ENCODE measurements at regions of chr2 and their contacts with region 1.

Region 1: DNA sequence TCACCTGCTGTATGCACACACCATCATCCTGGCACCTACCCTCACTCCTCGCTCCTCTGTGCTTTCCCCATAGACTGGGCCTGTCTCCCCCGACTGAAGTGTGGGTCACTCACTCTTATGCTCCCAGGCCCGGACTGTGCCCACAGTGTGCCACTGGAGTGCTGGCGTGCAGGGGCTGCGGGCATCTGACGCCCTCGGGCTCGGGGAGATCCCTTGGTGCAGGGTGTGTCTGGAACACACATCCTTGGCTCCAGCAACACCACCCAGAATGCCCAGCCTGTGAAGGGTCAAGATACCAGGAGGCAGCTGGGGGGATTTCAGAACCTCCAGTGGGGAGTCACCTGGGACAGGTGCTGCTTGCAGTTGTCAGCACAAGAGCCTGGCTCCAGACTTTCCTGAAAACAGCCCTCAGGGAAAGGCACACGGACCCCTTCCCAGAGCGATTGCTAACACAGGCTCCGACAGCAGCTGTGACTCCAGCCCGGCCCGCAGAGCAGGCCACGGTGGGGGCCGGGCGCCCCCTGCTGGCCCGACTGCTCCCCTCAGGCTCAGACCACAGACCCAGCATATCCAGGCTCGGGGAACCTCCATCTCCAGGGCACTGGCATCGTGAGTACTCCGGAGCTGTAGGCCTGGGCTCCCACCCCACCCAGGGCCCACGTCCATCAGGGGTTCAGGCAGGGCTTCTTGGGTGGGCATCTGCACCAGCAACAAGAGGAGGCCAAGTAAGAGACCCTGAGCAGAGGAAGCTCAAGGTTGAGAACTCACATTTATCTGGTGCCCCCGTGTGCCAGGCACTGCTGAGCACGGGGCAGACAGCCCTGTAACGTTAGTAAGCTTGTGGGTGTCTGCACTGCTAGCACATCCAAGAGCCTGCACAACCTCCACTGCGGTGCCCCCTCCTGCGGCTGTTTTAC is 8.6 kb downstream of the HS1BP3 start:
- DNase-seq: peak; percentile 74
- H3K4me3 Mint-ChIP-seq: no peak overlapping the region
- H3K27ac Mint-ChIP-seq: peak overlapping the region; percentile 46
- H3K4me1 Mint-ChIP-seq: no peaks in the 10 kb centered on the region
- H3K27me3 Mint-ChIP-seq: no peaks in the 10 kb centered on the region

Region 2: GRCh38 chr2:20411361-20411894 is 230.9 kb before region 1 on chr2:
- CTCF ChIA-PET with region 1: interaction called, 14 read pairs
- POLR2A ChIA-PET with region 1: no interaction called
- DNase-seq: peak; percentile 77
- H3K4me3 Mint-ChIP-seq: no peak overlapping the region
- H3K27ac Mint-ChIP-seq: no peak overlapping the region
- H3K4me1 Mint-ChIP-seq: peaks cover 1% of the 10 kb centered on the region
- H3K27me3 Mint-ChIP-seq: peaks cover 36% of the 10 kb centered on the region

Region 3: GRCh38 chr2:20424300-20425290 is 217.7 kb before region 1 on chr2:
- CTCF ChIA-PET with region 1: interaction called, 11 read pairs
- POLR2A ChIA-PET with region 1: no interaction called
- DNase-seq: peak; percentile 20
- H3K4me3 Mint-ChIP-seq: peak overlapping the region; percentile 17
- H3K27ac Mint-ChIP-seq: peak overlapping the region; percentile 90
- H3K4me1 Mint-ChIP-seq: peaks cover 28% of the 10 kb centered on the region
- H3K27me3 Mint-ChIP-seq: no peaks in the 10 kb centered on the region

Region 4: GRCh38 chr2:20438334-20439192 is 203.8 kb before region 1 on chr2:
- CTCF ChIA-PET with region 1: interaction called, 30 read pairs
- POLR2A ChIA-PET with region 1: no interaction called
- DNase-seq: no peak
- H3K4me3 Mint-ChIP-seq: no peak overlapping the region
- H3K27ac Mint-ChIP-seq: no peak overlapping the region
- H3K4me1 Mint-ChIP-seq: no peaks in the 10 kb centered on the region
- H3K27me3 Mint-ChIP-seq: peaks cover 41% of the 10 kb centered on the region

Region 5: DNA sequence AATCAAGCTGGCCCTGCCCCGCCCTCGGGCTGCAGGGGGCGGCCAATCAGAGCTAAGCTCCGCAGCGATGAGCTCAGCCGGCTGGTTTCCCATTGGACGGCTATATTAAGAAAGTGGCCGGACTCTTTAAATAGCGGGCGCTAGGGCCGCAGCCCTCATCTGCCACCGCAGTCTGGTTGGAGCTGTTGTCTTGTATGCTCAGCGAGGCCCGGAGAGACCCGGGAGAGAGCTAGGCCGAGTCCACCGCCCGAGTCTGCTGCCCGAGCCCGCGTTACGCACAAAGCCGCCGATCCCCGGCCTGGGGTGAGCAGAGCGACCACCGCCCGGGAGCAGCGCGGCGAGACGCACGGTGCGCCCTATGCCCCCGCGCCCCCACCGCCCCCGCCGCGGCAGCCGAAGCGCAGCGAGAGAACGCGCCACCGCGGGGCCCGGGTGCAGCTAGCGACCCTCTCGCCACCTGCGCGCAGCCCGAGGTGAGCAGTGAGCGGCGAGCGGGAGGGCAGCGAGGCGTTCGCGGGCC is 195.3 kb before region 1 on chr2 and contains the start of gene RHOB:
- CTCF ChIA-PET with region 1: interaction called, 30 read pairs
- POLR2A ChIA-PET with region 1: no interaction called
- DNase-seq: peak; percentile 88
- H3K4me3 Mint-ChIP-seq: peak within 1 kb of the TSS; percentile 68
- H3K27ac Mint-ChIP-seq: no peak within 1 kb of the TSS
- H3K4me1 Mint-ChIP-seq: peaks cover 7% of the 10 kb centered on the region
- H3K27me3 Mint-ChIP-seq: peaks cover 53% of the 10 kb centered on the region
- total RNA-seq, gene RHOB: 0.52 to 0.67 TPM

Region 6: DNA sequence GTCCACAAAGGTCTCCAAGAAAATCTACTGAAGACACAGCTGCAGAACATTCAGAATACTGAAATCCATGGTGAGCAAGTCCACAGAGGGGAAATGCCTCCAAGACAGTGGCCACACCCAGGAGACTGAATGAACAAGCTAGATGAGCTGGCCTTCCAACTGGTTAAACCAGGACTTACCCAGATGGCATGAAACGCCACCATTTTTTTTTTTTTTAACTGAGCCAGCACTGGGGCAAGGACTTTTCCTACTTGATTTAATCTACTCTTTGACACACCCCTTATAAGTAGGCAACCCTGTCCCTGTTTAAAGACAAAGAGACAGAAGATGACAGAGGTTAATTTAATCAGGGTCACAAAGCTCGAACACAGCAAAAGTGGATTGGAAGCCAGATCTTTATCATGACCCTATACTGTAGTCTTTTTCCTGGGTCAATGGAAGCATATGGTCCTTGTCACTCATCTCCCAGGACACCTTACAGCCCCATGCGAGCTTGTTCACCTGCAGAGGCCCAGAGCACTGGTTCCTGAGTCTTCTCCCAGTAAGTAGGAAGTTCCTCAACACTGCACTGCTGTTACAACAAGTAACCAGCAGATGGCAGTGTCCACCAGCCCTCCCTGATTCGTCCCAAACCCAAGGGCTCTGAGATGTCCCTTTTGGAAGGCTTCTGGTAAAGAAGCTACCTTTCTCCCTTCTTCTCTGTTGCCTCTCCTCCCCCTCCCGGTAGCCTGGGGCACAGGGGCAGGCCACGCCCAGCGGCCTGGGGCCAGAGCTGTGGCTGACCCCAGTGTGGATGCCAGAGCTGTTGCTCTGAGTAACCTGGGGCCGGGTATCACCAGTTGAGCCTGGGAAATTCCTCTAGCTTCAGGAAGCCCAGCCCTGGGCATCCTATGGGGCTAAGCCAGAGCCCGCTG is 19.0 kb after region 1 on chr2:
- CTCF ChIA-PET with region 1: no interaction called
- POLR2A ChIA-PET with region 1: no interaction called
- DNase-seq: peak; percentile 73
- H3K4me3 Mint-ChIP-seq: no peak overlapping the region
- H3K27ac Mint-ChIP-seq: no peak overlapping the region
- H3K4me1 Mint-ChIP-seq: peaks cover 7% of the 10 kb centered on the region
- H3K27me3 Mint-ChIP-seq: peaks cover 75% of the 10 kb centered on the region